Caco-2 (cell line): ENCODE measurements at regions of chr7 and their contacts with region 1.

Region 1: DNA sequence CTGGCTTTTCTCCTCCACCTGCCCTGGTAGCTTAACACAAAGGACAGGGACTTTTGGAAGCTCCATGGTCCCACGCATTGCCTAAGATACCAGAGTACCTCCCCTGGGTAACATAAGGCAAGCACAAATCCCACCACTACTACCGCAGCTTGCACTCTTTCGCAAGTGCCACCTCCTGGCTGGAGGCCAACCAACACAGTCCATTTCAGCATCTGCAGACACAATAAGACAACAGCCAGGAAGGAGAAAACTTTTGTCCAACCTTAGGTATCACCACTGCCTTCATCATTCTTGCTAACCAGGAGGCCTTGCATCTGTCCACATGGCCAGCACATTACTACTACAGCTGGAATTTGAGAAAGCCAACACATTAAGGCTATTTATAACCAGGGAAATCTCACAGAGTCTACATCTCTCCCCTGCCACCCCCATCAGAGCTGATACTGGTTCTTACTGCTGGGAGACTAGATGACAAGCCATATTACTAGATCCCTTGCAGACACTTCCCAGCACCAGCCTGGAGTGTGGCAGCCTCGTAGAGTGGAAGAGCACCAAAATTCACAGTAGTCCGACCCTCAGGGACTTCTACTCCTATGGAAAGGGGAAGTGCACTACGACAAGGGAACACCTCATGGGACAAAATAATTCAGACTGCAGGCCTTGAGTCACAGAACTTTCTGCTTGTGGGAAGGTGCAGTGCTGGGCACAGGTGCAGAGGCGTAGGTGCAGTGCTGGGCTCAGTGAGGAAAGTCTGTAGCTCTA is 39.8 kb upstream of the CDK13 start:
- DNase-seq: no peak
- H3K4me3 ChIP-seq: no peak overlapping the region
- H3K4me3 Mint-ChIP-seq: no peak overlapping the region
- H3K27ac Mint-ChIP-seq: no peak overlapping the region
- H3K4me1 ChIP-seq: no peaks in the 10 kb centered on the region
- H3K4me1 Mint-ChIP-seq: no peaks in the 10 kb centered on the region
- H3K27me3 ChIP-seq: no peaks in the 10 kb centered on the region; the same call in 1 of the 2 replicates
- H3K27me3 Mint-ChIP-seq: peaks cover 9% of the 10 kb centered on the region
- CTCF ChIP-seq: no peak

Region 2: DNA sequence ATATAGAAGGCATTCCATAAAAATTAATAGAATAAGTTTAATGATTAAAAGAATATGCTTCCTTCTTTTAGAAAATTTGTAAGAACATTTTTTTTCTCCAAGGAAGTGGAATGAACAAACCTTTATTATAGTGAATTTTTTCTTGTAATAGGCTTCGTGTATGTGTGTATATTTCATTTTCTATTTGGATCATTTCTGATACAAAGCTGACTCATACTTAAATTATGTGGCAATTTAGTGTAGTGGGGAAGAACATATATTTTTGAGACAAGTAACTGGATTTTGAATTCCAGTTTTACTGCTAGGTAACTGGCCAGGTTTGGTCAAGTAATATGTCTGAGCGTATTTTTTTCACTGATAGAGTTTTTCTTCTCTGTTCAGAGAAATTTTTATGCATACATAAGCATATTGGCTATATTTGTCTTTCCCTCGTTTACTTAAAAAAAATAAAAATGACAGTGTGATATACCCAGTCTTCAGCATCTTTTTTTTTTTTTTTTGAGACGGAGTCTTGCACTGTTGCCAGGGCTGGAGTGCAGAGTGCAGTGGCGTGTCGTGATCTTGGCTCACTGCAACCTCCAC is 90.5 kb after region 1 on chr7:
- CTCF ChIA-PET with region 1: no interaction called
- POLR2A ChIA-PET with region 1: interaction called, 19 read pairs
- intact Hi-C with region 1: no loop called
- DNase-seq: no peak
- H3K4me3 ChIP-seq: no peak overlapping the region
- H3K4me3 Mint-ChIP-seq: no peak overlapping the region
- H3K27ac Mint-ChIP-seq: no peak overlapping the region
- H3K4me1 ChIP-seq: no peaks in the 10 kb centered on the region
- H3K4me1 Mint-ChIP-seq: no peaks in the 10 kb centered on the region
- H3K27me3 ChIP-seq: no peaks in the 10 kb centered on the region
- H3K27me3 Mint-ChIP-seq: no peaks in the 10 kb centered on the region
- CTCF ChIP-seq: no peak